ENCODE measurements at regions of chr7 and their contacts with region 1.

Region 1: GRCh38 chr7:144835652-144836544 is at the start of gene TPK1:
- DNase-seq: peak; percentile 94
- CTCF ChIP-seq: no peak

Region 2: DNA sequence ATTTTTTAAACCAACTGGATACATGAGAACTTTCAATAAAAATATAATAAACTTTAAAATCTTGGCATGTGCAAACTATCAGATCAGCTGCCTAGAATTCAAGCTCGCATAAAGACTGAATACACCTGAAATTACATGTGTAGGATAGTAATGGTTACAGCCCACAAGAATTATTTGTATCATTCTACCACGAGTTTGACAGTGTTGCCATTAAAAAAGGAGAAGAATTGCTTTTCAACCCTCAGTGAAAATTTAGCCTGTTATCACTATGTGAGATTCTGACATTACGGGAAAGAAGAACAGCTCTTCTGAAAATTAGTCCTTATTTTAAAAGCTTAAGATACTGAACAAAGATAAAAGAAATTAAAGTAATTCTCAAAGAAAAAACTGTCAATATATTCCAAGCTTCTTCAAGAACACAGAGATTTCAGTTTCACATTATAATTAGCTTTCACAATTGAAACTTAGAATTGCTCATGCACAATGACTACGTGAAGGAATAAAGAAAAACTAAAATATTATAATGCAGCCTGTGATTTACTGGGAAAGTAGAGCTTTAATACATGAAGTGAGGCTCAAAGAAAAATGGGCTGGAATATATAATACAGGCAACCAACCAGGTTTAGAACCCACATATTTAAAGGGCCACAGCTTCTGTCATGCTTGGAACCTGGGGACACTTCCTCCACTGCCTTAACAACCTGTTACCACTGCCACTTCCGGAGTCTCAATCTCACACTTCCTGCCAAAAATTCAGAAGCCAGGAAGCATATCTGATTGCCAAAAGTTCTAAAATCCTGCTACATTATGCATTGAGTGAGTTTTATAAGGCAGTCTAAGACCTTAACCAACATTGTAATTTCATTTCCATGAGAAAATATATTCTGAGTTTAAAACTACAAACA is 23.3 kb before region 1 on chr7:
- CTCF ChIA-PET with region 1: interaction called, 17 read pairs
- POLR2A ChIA-PET with region 1: interaction called, 4 read pairs
- DNase-seq: no peak
- CTCF ChIP-seq: no peak

Region 3: DNA sequence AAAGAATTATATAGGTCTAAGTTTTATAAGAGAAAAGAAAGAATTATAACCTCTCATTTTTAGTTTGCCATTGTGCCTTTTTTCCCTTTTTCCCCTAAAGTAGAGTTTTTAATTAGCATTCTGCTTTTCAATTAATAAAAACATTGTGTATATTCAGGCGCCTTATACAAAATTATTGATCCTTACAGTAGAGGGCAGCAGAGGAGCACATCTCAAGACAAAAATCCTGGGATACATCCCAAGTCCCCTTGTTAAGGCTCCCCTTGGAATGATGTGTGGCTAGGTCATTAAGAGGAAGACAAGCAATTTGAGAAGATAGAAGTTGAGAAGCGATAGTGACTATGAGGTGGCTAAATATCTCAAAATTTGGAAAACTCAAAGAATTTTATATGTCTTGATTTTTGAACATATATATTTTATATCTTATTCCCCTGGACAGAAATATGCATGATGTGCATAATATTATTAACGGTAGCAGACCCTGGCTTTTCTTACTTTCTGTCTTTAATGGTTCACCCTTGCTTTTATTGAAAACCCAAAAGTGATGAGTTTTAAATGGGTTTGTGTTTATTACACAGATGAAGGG is 19.0 kb after region 1 on chr7:
- CTCF ChIA-PET with region 1: interaction called, 10 read pairs
- POLR2A ChIA-PET with region 1: no interaction called
- DNase-seq: no peak
- CTCF ChIP-seq: peak; percentile 44

Measured in GM10248 (cell line).